Ovary (tissue), 10 donors: ENCODE measurements at regions of chr19 and their contacts with region 1.

Region 1: GRCh38 chr19:10695401-10696398 is 5.5 kb upstream of the QTRT1 start:
- DNase-seq: peak; percentile 87 to 96 (median 89)
- H3K4me3 ChIP-seq: no peak overlapping the region
- H3K27ac ChIP-seq: no peak overlapping the region
- H3K4me1 ChIP-seq: peaks cover 6% of the 10 kb centered on the region
- H3K27me3 ChIP-seq: no peaks in the 10 kb centered on the region
- CTCF ChIP-seq: no peak
- EP300 ChIP-seq: no peak
- POLR2A ChIP-seq: no peak

Region 2: DNA sequence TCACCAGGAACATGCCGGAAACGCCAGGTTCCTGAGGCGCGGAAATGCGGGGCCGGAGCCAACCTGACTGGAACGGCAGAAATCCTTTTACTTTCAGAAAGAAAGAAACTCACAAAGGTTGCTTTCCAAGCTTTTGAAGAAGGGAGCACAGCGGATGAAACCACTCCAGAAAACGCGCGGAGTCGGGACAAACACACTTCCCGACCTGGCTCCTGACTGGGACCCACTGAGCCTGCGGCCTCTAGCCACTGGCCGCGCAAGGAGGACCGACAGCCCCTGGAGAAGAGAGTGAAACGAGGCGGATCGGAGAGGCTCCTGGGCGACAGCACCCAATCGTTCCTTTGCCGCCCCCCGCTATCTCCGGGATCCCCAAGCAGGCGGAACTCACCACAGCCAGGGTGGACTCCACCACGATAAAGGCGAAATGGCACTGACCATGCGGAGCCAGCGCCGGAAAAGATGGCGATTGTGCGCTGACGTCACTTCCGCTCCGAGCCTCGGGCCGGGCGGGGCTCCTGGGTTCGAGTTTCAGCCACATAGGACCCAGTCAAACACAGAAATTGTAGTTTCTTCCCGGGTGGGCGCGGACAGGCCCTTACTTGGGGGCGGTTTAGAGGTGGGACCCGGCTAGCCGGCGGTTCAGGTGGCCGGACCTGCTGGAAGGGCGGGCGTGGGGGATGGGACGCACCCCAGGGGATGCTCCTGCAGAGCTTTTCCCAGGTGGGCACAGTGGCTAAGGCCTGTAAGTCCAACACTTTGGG is 1111.4 kb before region 1 on chr19 and contains the start of gene ZNF121:
- intact Hi-C with region 1: no loop called
- DNase-seq: peak; percentile 80 to 90 (median 85)
- H3K4me3 ChIP-seq: peak within 1 kb of the TSS; percentile 85
- H3K27ac ChIP-seq: peak within 1 kb of the TSS; percentile 85 to 88
- H3K4me1 ChIP-seq: peaks cover 4% of the 10 kb centered on the region
- H3K27me3 ChIP-seq: no peaks in the 10 kb centered on the region
- CTCF ChIP-seq: no peak
- EP300 ChIP-seq: no peak
- POLR2A ChIP-seq: peak; percentile 64
- total RNA-seq, gene ZNF121: 19.6 to 49.0 (median 33.2) TPM

Region 3: GRCh38 chr19:10654493-10655304 is 41.0 kb before region 1 on chr19:
- intact Hi-C with region 1: loop called in 1 of 4 experiments (anchors 5 kb)
- DNase-seq: peak; percentile 62 to 80 (median 75)
- H3K4me3 ChIP-seq: peak overlapping the region; percentile 87
- H3K27ac ChIP-seq: peak overlapping the region; percentile 96 to 98
- H3K4me1 ChIP-seq: peaks cover 9% of the 10 kb centered on the region
- H3K27me3 ChIP-seq: no peaks in the 10 kb centered on the region
- CTCF ChIP-seq: no peak
- EP300 ChIP-seq: no peak
- POLR2A ChIP-seq: no peak